Dorsolateral prefrontal cortex (tissue), 120 donors: ENCODE measurements at regions of chr12 and their contacts with region 1.

Region 1: GRCh38 chr12:101830367-101831325 is at the start of gene GNPTAB:
- DNase-seq: peak; percentile 81 to 95 (median 91)
- H3K4me3 ChIP-seq: peak within 1 kb of the TSS; percentile 51 to 98 (median 86)
- H3K27ac ChIP-seq: peak within 1 kb of the TSS in 57 of 59 donors; percentile 32 to 93 (median 79)
- H3K27me3 ChIP-seq: no peaks in the 10 kb centered on the region
- CTCF ChIP-seq: peak; percentile 50 to 88 (median 73)
- total RNA-seq, gene GNPTAB: 43.8 to 111 (median 81.7) TPM

Region 2: DNA sequence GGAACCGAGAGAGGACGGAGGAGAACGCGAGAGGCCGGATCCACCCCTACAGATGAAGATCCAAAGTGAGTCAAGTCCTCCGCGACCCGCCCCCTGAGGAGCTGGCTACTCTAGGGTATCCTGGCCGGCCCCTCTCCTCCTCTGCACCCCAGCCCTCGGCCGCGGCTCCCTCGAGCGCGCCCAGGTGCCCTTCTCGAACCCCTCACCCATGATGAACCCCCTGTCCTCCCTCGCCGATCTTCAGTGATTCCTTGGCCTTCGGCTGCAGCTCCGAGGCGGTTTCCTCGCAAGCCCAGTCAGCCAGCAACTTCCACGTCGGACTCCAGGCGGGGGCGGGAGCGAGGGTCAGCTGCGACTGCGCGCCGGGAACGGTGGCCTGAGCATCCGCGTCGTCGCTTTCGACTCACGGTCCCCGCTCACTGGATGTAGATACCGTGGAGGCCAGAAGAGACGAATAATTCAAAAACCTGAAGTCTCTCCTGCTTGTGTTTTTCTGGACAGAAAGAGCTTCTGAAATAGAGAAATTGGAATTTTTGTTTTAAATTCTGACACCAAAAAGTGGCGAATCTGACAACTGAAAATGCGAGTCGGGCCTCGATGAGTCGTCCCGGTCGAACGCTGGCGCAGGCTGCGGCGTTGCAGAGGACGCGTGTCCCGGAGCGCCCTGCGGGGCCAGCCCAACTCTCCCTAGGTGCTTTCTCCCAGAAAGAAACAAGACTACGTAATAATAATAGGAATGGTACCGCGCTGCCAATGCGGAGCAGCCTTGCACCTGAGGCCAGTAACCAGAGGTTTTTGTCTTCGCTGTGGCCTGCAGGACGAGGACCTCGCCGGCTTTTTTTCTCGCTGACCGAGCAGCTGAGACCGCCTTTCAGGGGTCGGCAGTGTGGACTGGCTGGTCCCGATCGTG is 423.0 kb before region 1 on chr12 and contains the start of gene ARL1:
- intact Hi-C with region 1: loop called (anchors 5 to 10 kb)
- DNase-seq: peak; percentile 77 to 91 (median 83)
- H3K4me3 ChIP-seq: peak within 1 kb of the TSS; percentile 69 to 99 (median 92)
- H3K27ac ChIP-seq: peak within 1 kb of the TSS; percentile 68 to 98 (median 94)
- H3K27me3 ChIP-seq: no peaks in the 10 kb centered on the region
- CTCF ChIP-seq: peak in 31 of 56 donors; percentile 7 to 58 (median 33)
- total RNA-seq, gene ARL1: 52.3 to 116 (median 86.3) TPM

Region 3: GRCh38 chr12:101792051-101792931 is 38.4 kb before region 1 on chr12:
- intact Hi-C with region 1: loop called in 1 of 2 experiments (anchors 5 kb)
- DNase-seq: no peak
- H3K4me3 ChIP-seq: no peak overlapping the region
- H3K27ac ChIP-seq: no peak overlapping the region
- H3K27me3 ChIP-seq: no peaks in the 10 kb centered on the region
- CTCF ChIP-seq: peak in 50 of 56 donors; percentile 27 to 64 (median 43)

Region 4: GRCh38 chr12:102052192-102053061 is 221.8 kb after region 1 on chr12:
- intact Hi-C with region 1: no loop called
- DNase-seq: no peak
- H3K4me3 ChIP-seq: no peak overlapping the region
- H3K27ac ChIP-seq: no peak overlapping the region
- H3K27me3 ChIP-seq: no peaks in the 10 kb centered on the region
- CTCF ChIP-seq: no peak